CD4-positive, alpha-beta memory T cell (primary cell): ENCODE measurements at regions of chr10 and their contacts with region 1.

Region 1: GRCh38 chr10:6647811-6648526 is 67.9 kb upstream of the PRKCQ start:
- DNase-seq: peak; percentile 61 to 72 (median 65)
- H3K4me3 ChIP-seq: no peak overlapping the region
- H3K4me3 Mint-ChIP-seq: no peak overlapping the region
- H3K27ac ChIP-seq: no peak overlapping the region
- H3K27ac Mint-ChIP-seq: peak overlapping the region in 3 of 7 donors; percentile 4 to 75 (median 72)
- H3K4me1 ChIP-seq: peaks cover 23% of the 10 kb centered on the region
- H3K4me1 Mint-ChIP-seq: peaks cover 12 to 30% (median 17%) of the 10 kb centered on the region in 4 donors
- H3K27me3 ChIP-seq: no peaks in the 10 kb centered on the region
- H3K27me3 Mint-ChIP-seq: no peaks in the 10 kb centered on the region

Region 2: GRCh38 chr10:5861269-5862031 is 786.5 kb before region 1 on chr10:
- CTCF ChIA-PET with region 1: no interaction called
- POLR2A ChIA-PET with region 1: no interaction called
- intact Hi-C with region 1: no loop called
- DNase-seq: no peak
- H3K4me3 ChIP-seq: no peak overlapping the region
- H3K4me3 Mint-ChIP-seq: no peak overlapping the region
- H3K27ac ChIP-seq: no peak overlapping the region
- H3K27ac Mint-ChIP-seq: no peak overlapping the region
- H3K4me1 ChIP-seq: no peaks in the 10 kb centered on the region
- H3K4me1 Mint-ChIP-seq: peaks cover 0 to 2% (median 0%) of the 10 kb centered on the region in 4 donors
- H3K27me3 ChIP-seq: no peaks in the 10 kb centered on the region
- H3K27me3 Mint-ChIP-seq: no peaks in the 10 kb centered on the region

Region 3: DNA sequence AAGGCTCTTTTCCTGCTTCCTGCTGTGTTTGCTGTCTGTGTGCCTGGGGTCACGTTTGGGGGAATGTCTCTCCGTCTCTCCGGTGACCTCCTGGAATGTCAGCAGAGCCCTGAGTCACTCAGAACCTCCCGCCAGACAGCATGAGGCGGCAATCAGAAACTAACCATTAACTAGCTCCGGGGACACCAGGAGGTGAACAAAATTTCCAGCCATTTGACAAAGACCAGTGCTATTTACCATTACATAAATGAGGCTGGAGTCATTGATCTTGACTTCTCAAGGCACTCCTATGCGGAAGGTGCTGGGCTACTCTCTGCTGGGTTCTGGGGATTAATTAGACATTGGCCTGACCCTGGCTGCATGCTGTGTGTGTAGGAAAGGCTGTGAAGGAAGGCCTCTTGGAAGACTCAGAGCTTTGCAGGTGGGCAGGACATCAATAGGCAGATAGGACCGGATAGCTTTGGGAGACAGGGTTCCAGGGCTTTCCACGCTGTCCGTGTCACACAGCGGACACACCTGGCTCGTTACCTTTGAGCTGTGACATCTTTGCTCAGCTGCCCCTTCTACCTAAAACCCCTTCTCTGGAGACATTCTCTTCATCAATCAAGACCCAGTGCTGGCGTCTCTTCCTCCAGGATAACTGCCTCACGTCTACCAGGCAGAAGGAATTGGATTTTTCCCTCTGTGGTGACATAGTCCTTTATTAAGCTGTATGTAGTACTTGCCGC is 368.3 kb before region 1 on chr10:
- CTCF ChIA-PET with region 1: no interaction called
- POLR2A ChIA-PET with region 1: no interaction called
- intact Hi-C with region 1: no loop called
- DNase-seq: no peak
- H3K4me3 ChIP-seq: no peak overlapping the region
- H3K4me3 Mint-ChIP-seq: peak overlapping the region in 1 of 8 donors; percentile 9
- H3K27ac ChIP-seq: no peak overlapping the region
- H3K27ac Mint-ChIP-seq: peak overlapping the region in 6 of 7 donors; percentile 7 to 84 (median 56)
- H3K4me1 ChIP-seq: peaks cover 25% of the 10 kb centered on the region
- H3K4me1 Mint-ChIP-seq: peaks cover 14 to 41% (median 25%) of the 10 kb centered on the region in 4 donors
- H3K27me3 ChIP-seq: no peaks in the 10 kb centered on the region
- H3K27me3 Mint-ChIP-seq: no peaks in the 10 kb centered on the region

Region 4: DNA sequence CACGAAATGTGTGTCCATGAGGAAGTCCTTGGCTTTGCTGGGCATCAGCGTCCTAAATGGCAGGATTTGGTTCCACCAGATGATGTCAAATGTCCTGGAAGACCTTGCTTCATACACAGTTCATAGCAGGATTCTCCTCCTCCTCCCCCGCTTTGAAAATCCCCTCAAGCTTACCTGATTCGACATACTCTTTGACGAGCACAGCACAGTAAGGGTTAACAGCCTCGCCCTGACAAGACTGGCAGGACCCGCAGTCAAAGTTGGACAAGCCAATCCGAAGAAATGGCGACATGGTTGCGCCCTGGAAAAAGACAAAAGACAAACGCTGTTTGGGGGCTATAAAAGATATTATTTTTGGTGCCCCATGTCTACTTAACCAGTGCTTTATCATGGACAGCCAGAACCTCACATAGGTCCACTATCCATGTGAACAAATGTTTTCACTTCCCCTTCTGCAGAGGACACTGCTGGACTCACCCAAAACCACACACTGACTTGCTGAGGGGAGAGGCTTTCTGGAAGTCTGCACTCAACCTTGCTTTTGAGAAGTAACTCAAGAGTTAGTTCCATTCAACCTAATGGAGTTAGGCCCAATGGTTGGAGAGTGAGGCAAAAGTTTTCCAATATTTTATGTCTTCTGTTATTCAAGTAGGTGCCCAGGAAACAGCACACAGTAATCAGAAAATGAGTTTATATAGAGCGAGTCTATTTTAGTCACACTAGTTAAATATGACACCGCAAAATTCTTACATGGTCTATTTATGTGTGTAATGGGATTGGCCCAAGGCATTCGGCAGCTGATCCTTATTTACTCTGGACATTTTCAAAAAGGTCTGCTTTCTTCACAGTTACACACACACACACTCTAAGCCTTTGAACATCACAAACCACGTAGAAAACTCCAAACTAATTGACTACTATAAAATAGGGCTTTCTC is 132.9 kb before region 1 on chr10:
- CTCF ChIA-PET with region 1: interaction called, 17 read pairs
- POLR2A ChIA-PET with region 1: no interaction called
- intact Hi-C with region 1: loop called (anchors 1 kb)
- DNase-seq: no peak
- H3K4me3 ChIP-seq: no peak overlapping the region
- H3K4me3 Mint-ChIP-seq: peak overlapping the region in 1 of 8 donors; percentile 11
- H3K27ac ChIP-seq: no peak overlapping the region
- H3K27ac Mint-ChIP-seq: peak overlapping the region in 6 of 7 donors; percentile 21 to 83 (median 68)
- H3K4me1 ChIP-seq: peaks cover 78% of the 10 kb centered on the region
- H3K4me1 Mint-ChIP-seq: peaks cover 63 to 94% (median 75%) of the 10 kb centered on the region in 4 donors
- H3K27me3 ChIP-seq: no peaks in the 10 kb centered on the region
- H3K27me3 Mint-ChIP-seq: no peaks in the 10 kb centered on the region

Region 5: GRCh38 chr10:6563075-6563474 is 84.9 kb before region 1 on chr10:
- CTCF ChIA-PET with region 1: interaction called, 10 read pairs
- POLR2A ChIA-PET with region 1: interaction called, 4 read pairs
- intact Hi-C with region 1: no loop called
- DNase-seq: peak in 2 of 5 donors; percentile 35 to 62
- H3K4me3 ChIP-seq: peak overlapping the region in 1 of 2 donors; percentile 21
- H3K4me3 Mint-ChIP-seq: peak overlapping the region; percentile 68 to 90 (median 79)
- H3K27ac ChIP-seq: peak overlapping the region; percentile 56
- H3K27ac Mint-ChIP-seq: peak overlapping the region; percentile 85 to 94 (median 90)
- H3K4me1 ChIP-seq: peaks cover 98% of the 10 kb centered on the region
- H3K4me1 Mint-ChIP-seq: peaks cover 79 to 94% (median 88%) of the 10 kb centered on the region in 4 donors
- H3K27me3 ChIP-seq: no peaks in the 10 kb centered on the region
- H3K27me3 Mint-ChIP-seq: no peaks in the 10 kb centered on the region

Region 6: DNA sequence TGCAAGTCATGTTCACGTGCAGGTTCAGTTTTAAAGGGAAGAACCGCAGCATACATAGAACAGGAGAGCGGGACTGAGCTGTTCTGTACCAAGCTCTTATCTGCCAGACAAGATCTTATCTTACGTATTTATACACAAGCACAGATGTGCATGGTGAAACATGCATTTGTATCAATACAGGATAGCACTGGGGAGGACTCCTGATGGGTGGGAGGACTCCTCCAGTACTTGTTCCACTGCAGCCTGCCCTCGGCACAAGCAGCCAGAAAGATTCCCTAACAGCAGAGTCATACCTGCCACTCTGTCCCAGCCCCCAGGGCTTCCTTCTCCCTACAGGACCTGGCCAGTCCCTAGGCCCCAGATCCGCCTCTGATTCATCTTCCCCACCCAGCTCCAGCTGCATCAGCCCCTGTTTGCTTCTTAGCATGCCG is 54.7 kb before region 1 on chr10:
- CTCF ChIA-PET with region 1: interaction called, 16 read pairs
- POLR2A ChIA-PET with region 1: interaction called, 5 read pairs
- intact Hi-C with region 1: no loop called
- DNase-seq: peak in 4 of 5 donors; percentile 24 to 68 (median 28)
- H3K4me3 ChIP-seq: no peak overlapping the region
- H3K4me3 Mint-ChIP-seq: peak overlapping the region; percentile 39 to 81 (median 74)
- H3K27ac ChIP-seq: peak overlapping the region; percentile 40
- H3K27ac Mint-ChIP-seq: peak overlapping the region; percentile 88 to 97 (median 94)
- H3K4me1 ChIP-seq: peaks cover 93% of the 10 kb centered on the region
- H3K4me1 Mint-ChIP-seq: peaks cover 63 to 97% (median 77%) of the 10 kb centered on the region in 4 donors
- H3K27me3 ChIP-seq: no peaks in the 10 kb centered on the region
- H3K27me3 Mint-ChIP-seq: no peaks in the 10 kb centered on the region

Region 7: DNA sequence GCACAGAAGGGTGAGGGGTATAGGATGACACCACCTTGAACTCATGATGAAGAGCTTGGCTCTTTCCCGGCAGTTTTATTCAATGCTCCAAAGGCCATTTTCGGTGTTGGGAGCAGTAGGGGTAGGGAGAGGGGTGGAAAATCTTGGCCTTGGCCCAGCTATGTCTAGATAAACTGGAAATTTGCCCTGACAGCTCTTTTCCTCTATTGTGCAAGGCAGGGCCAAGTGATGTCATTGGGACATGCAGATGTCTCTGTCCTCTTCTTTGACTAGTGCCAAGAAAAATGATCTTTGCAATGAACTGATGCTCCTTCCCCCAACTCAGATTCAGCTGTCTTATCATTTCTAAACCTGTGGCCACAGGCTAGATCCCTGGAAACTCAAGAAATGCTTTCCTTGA is 40.2 kb before region 1 on chr10:
- CTCF ChIA-PET with region 1: interaction called, 7 read pairs
- POLR2A ChIA-PET with region 1: interaction called, 6 read pairs
- intact Hi-C with region 1: loop called (anchors 5 kb)
- DNase-seq: no peak
- H3K4me3 ChIP-seq: no peak overlapping the region
- H3K4me3 Mint-ChIP-seq: peak overlapping the region in 1 of 8 donors; percentile 72
- H3K27ac ChIP-seq: peak overlapping the region; percentile 43
- H3K27ac Mint-ChIP-seq: peak overlapping the region; percentile 73 to 97 (median 93)
- H3K4me1 ChIP-seq: peaks cover 47% of the 10 kb centered on the region
- H3K4me1 Mint-ChIP-seq: peaks cover 43 to 74% (median 53%) of the 10 kb centered on the region in 4 donors
- H3K27me3 ChIP-seq: no peaks in the 10 kb centered on the region
- H3K27me3 Mint-ChIP-seq: no peaks in the 10 kb centered on the region

Region 8: GRCh38 chr10:6659471-6659870 is 11.5 kb after region 1 on chr10:
- CTCF ChIA-PET with region 1: interaction called, 15 read pairs
- POLR2A ChIA-PET with region 1: interaction called, 4 read pairs
- intact Hi-C with region 1: no loop called
- DNase-seq: no peak
- H3K4me3 ChIP-seq: no peak overlapping the region
- H3K4me3 Mint-ChIP-seq: no peak overlapping the region
- H3K27ac ChIP-seq: no peak overlapping the region
- H3K27ac Mint-ChIP-seq: no peak overlapping the region
- H3K4me1 ChIP-seq: no peaks in the 10 kb centered on the region
- H3K4me1 Mint-ChIP-seq: peaks cover 0 to 6% (median 3%) of the 10 kb centered on the region in 4 donors
- H3K27me3 ChIP-seq: no peaks in the 10 kb centered on the region
- H3K27me3 Mint-ChIP-seq: peaks cover 0 to 2% of the 10 kb centered on the region in 2 donors

Region 9: DNA sequence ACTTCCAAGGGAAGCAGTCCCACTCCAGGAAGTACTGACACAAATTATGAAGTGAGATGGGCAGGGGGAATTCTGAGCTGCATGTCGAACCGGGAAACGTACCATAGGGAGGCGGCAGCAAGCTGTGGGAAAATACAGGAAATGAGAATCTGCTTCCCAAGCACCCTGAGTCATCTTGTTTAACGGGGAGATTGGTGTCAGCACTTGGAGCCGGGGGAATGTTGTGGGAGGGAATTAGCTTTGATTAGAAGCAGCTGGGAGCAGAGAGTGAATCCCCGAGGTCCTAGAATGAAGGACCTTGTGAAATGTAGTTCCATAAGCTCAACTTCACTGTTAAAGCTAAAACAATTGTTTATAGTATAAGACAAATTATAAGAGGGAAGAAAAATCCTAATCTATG is 73.5 kb after region 1 on chr10:
- CTCF ChIA-PET with region 1: no interaction called
- POLR2A ChIA-PET with region 1: no interaction called
- intact Hi-C with region 1: no loop called
- DNase-seq: no peak
- H3K4me3 ChIP-seq: no peak overlapping the region
- H3K4me3 Mint-ChIP-seq: no peak overlapping the region
- H3K27ac ChIP-seq: no peak overlapping the region
- H3K27ac Mint-ChIP-seq: no peak overlapping the region
- H3K4me1 ChIP-seq: no peaks in the 10 kb centered on the region
- H3K4me1 Mint-ChIP-seq: no peaks in the 10 kb centered on the region
- H3K27me3 ChIP-seq: peaks cover 10% of the 10 kb centered on the region
- H3K27me3 Mint-ChIP-seq: peaks cover 45 to 48% of the 10 kb centered on the region in 2 donors